Tibial artery (tissue), 4 donors: ENCODE measurements at regions of chr20 and their contacts with region 1.

Region 1: DNA sequence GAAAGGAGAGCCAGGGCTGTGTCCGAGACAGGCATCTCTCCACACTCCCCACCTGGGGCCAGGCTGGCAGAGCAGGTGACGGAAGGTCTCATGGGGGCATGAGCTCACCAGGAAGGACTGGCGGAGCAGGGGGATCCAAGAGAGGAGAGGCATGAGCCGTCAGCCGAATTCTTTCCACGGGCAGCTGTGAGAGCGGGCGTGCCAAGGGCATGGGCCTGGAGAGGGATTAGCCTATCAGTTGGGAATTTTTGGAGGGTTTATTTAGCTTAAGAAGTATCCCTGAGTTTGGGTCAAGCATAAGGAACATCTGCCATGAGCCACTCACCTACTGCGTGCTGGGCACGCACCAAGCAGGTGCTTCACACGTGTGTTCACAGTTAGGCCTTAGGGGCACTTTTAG is 60.2 kb upstream of the ZNFX1 start:
- DNase-seq: no peak
- H3K4me3 ChIP-seq: no peak overlapping the region
- H3K27ac ChIP-seq: no peak overlapping the region
- H3K4me1 ChIP-seq: peaks cover 0 to 16% (median 3%) of the 10 kb centered on the region in 4 donors
- H3K27me3 ChIP-seq: peaks cover 0 to 7% of the 10 kb centered on the region in 2 donors
- CTCF ChIP-seq: no peak

Region 2: DNA sequence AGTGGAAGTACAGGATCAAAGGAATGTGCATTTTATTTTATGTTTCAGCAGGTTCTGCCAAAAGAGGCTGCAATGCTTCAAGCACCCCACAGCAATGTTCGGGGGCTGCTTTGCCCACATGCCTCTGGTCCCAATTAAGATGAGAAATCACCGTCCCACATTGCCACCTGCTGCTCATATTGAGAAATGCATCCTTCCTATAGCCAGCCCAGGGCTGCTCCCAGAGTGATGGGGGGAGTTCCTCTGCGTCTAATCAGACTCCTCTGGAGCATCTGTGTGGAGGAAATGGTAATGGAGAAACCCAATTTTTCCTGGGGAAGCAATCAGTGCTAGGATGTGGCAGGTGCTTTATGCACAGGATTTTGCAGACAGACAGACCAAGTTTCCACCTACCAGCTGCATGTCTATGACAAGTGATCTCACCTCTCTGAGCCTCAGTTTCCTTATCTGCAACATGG is 196.2 kb after region 1 on chr20:
- intact Hi-C with region 1: loop called (anchors 2 kb)
- DNase-seq: no peak
- H3K4me3 ChIP-seq: no peak overlapping the region
- H3K27ac ChIP-seq: peak overlapping the region; percentile 9 to 13
- H3K4me1 ChIP-seq: peaks cover 0 to 41% (median 7%) of the 10 kb centered on the region in 4 donors
- H3K27me3 ChIP-seq: no peaks in the 10 kb centered on the region
- CTCF ChIP-seq: peak; percentile 82 to 86